Motor neuron (in vitro differentiated cells): ENCODE measurements at regions of chr3 and their contacts with region 1.

Region 1: GRCh38 chr3:45043728-45044299 is 17.7 kb downstream of the CLEC3B start:
- ATAC-seq: no peak
- H3K4me3 ChIP-seq: no peak overlapping the region
- H3K27ac ChIP-seq: no peak overlapping the region
- H3K4me1 ChIP-seq: no peaks in the 10 kb centered on the region

Region 2: DNA sequence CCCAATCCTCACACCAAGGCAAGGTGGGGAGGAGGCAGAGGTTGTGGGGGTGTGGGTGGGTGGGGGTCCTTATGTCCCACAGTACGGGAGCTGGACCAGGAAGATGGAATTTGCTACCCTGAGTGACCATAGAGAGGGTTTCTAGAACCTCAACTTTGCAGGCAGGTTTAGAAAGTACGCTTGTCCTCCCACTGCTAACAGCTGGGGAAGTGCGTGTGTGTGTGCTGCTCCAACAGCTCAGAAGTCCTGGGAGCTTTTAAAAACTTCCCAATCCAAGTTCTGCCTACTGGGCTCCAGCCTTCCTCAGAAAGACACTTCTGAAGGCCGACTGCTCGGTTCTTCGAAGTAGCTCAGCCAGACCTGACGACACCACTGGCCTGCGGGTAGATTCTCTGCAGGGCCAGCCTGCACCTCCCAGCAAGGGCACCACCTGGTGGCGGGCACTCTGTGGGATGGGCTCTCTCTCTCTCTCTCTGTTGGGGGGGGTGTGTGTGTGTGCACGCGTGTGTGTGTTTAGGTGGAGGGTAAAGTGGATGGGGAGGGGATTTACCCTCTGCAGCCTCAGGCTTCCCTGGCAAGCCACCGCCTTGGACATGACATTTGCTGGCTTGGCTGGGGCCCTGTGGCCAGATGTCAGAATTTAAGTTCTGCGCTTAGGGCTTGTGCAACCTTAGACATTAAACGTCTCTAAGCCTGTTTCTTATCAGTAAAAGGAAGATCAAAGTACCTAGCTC is 166.7 kb after region 1 on chr3:
- in situ Hi-C with region 1: loop called in 7 of 9 experiments (anchors 5 to 25 kb)
- ATAC-seq: peak; percentile 61 to 100 (median 82)
- H3K4me3 ChIP-seq: no peak overlapping the region
- H3K27ac ChIP-seq: no peak overlapping the region
- H3K4me1 ChIP-seq: no peaks in the 10 kb centered on the region

Region 3: GRCh38 chr3:45462522-45463265 is 418.9 kb after region 1 on chr3:
- in situ Hi-C with region 1: no loop called
- ATAC-seq: peak in 3 of 8 experiments; percentile 59 to 74 (median 64)
- H3K4me3 ChIP-seq: no peak overlapping the region
- H3K27ac ChIP-seq: no peak overlapping the region
- H3K4me1 ChIP-seq: peaks cover 6 to 7% of the 10 kb centered on the region in 2 donors

Region 4: DNA sequence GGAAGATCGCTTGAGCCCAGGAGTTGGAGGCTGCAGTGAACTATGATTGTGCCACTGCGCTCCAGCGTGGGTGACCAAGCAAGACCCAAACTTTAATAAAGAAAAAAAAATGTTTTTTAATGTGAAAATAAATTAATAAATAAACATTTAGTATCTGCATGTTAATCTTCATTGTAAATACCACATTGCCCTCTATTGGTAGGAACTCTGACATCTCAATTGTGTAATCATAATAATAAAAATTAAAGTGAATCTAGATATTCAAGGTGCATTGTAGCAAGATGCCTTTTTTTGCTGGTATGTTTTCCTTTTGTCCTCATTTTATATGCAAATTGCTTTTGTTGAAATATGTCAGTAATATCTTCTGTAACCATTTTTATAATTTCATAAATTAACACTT is 455.7 kb after region 1 on chr3:
- in situ Hi-C with region 1: loop called in 5 of 9 experiments (anchors 10 to 25 kb)
- ATAC-seq: peak in 3 of 8 experiments; percentile 33 to 49 (median 39)
- H3K4me3 ChIP-seq: no peak overlapping the region
- H3K27ac ChIP-seq: no peak overlapping the region
- H3K4me1 ChIP-seq: peaks cover 0 to 9% of the 10 kb centered on the region in 2 donors

Region 5: DNA sequence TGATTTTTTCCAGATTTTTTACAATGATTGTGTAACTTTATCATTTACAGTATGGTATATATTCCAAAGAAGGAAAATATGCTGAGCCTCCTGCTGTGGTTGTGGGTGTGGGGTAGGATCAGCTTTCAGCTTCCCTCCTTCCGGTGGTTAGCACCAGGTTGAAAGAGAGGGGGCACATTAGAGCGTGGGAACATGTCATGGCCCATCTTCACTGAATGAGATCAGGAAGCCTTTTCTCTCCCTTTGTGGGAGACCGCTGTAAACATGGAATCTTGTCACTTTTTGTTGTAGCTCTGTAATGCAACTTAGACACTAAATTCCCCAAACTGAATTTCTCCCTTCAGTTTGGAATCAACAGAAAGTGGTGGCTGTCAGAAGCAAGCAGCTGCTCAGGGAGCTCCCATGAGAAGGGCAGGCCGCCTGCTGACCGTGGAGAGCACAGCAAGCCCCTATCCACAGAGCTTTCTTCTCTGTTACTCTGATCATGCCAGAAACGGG is 464.1 kb after region 1 on chr3:
- in situ Hi-C with region 1: loop called in 3 of 9 experiments (anchors 10 to 25 kb)
- ATAC-seq: peak in 7 of 8 experiments; percentile 3 to 70 (median 33)
- H3K4me3 ChIP-seq: no peak overlapping the region
- H3K27ac ChIP-seq: peak overlapping the region; percentile 71 to 73
- H3K4me1 ChIP-seq: peaks cover 24 to 30% of the 10 kb centered on the region in 2 donors